ENCODE measurements at regions of chr9 and their contacts with region 1.

Region 1: GRCh38 chr9:112717661-112718341 is at the start of gene INIP:
- DNase-seq: peak; percentile 93 to 98 (median 96)
- H3K4me3 ChIP-seq: peak within 1 kb of the TSS; percentile 70 to 99 (median 92)
- H3K27ac ChIP-seq: peak within 1 kb of the TSS; percentile 66 to 98 (median 90)
- H3K27me3 ChIP-seq: no peaks in the 10 kb centered on the region
- CTCF ChIP-seq: peak in 25 of 56 donors; percentile 7 to 47 (median 24)
- total RNA-seq, gene INIP: 23.7 to 52.8 (median 39.3) TPM

Region 2: DNA sequence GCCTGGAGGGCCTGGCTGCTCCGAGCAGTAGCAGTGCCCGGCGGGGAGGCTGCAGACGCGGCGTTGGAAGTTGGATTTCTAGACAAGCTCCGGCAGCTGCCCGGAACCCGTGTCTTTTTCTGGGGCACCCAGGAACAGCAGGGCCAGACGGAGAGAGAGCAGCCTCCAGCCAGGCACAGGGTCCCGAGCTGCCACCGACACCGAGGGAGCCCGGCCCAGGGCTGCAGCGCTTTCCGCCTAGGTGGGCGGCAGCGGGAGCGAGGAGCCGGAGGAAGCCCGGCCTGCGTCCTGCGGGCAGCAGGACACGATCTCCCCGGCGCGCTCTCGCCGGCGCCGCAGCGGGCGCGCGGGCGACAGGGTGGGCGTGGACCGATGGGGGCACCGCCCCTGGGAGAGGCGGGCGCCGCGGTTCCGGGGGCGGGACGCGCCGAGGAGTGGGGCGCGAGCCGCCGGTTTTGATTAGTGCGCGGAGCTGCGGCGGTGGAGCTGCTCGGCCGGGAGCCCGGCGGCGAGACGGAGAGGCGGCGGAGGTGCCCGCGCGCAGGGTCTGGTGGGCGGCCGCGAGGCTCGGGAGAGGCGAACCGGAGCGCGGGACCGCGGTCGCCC is 821.3 kb before region 1 on chr9 and contains the start of gene UGCG:
- intact Hi-C with region 1: loop called in 1 of 2 experiments (anchors 5 kb)
- DNase-seq: peak; percentile 62 to 94 (median 86)
- H3K4me3 ChIP-seq: peak within 1 kb of the TSS; percentile 68 to 98 (median 89)
- H3K27ac ChIP-seq: peak within 1 kb of the TSS in 58 of 59 donors; percentile 67 to 96 (median 90)
- H3K27me3 ChIP-seq: no peaks in the 10 kb centered on the region
- CTCF ChIP-seq: peak in 10 of 56 donors; percentile 4 to 55 (median 12)
- total RNA-seq, gene UGCG: 12.6 to 46.0 (median 30.8) TPM

Region 3: GRCh38 chr9:112443200-112443599 is 274.6 kb before region 1 on chr9:
- intact Hi-C with region 1: loop called in 1 of 2 experiments (anchors 10 kb)
- DNase-seq: peak in 1 of 10 donors; percentile 31
- H3K4me3 ChIP-seq: no peak overlapping the region
- H3K27ac ChIP-seq: no peak overlapping the region
- H3K27me3 ChIP-seq: no peaks in the 10 kb centered on the region
- CTCF ChIP-seq: peak in 55 of 56 donors; percentile 25 to 79 (median 60)

Region 4: GRCh38 chr9:112750111-112750767 is 32.4 kb after region 1 on chr9 and contains the start of gene SNX30:
- intact Hi-C with region 1: loop called (anchors 2 kb)
- DNase-seq: peak; percentile 83 to 93 (median 89)
- H3K4me3 ChIP-seq: peak within 1 kb of the TSS; percentile 78 to 99 (median 94)
- H3K27ac ChIP-seq: peak within 1 kb of the TSS; percentile 83 to 100 (median 97)
- H3K27me3 ChIP-seq: no peaks in the 10 kb centered on the region
- CTCF ChIP-seq: peak in 48 of 56 donors; percentile 9 to 63 (median 42)
- total RNA-seq, gene SNX30: 19.1 to 51.5 (median 35.4) TPM

Region 5: GRCh38 chr9:112764344-112764743 is 46.5 kb after region 1 on chr9:
- intact Hi-C with region 1: no loop called
- DNase-seq: no peak
- H3K4me3 ChIP-seq: no peak overlapping the region
- H3K27ac ChIP-seq: peak overlapping the region in 19 of 59 donors; percentile 2 to 55 (median 29)
- H3K27me3 ChIP-seq: no peaks in the 10 kb centered on the region
- CTCF ChIP-seq: no peak

Region 6: DNA sequence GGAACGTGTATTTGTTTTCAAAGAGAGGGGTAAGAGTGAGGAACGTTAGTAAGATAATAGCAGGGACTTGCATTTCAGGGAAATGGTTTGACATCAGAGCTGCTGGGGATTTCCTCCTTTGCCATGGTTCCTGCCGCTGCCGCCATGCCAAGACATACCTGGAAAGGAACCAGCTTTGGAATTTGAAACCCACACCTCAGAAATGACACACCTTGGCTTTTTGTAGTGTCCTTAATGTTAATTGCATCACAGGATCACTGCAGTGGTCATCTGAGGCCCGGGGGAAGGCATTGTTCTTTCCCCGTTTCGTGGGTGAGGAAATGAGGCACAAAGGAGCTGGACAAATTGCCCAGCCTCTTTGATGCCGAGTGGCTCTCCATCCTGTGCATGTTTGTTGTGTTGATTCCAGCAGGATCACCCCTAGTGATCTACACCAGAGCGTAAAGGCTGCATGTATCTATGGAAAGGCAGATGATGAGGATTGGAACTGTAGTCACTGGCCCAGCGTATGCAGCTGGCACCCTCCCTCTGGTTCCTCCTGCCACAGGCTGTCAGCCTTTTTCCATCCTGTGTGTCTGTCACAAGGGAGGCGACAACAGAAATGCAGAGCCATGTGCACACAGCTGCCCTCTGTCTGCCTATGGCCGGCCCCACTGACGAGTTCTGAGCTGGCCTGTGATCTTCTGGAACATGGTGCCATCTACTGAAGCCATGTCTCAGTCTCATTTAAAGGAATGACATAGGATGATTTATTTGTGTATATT is 135.1 kb after region 1 on chr9:
- intact Hi-C with region 1: loop called in 1 of 2 experiments (anchors 5 kb)
- DNase-seq: peak in 9 of 10 donors; percentile 51 to 89 (median 77)
- H3K4me3 ChIP-seq: peak overlapping the region in 1 of 59 donors; percentile 8
- H3K27ac ChIP-seq: peak overlapping the region in 57 of 59 donors; percentile 1 to 92 (median 76)
- H3K27me3 ChIP-seq: no peaks in the 10 kb centered on the region
- CTCF ChIP-seq: peak in 51 of 56 donors; percentile 17 to 80 (median 47)

Region 7: GRCh38 chr9:112867416-112867991 is 149.7 kb after region 1 on chr9:
- intact Hi-C with region 1: no loop called
- DNase-seq: no peak
- H3K4me3 ChIP-seq: no peak overlapping the region
- H3K27ac ChIP-seq: peak overlapping the region in 2 of 59 donors; percentile 22 to 23
- H3K27me3 ChIP-seq: no peaks in the 10 kb centered on the region
- CTCF ChIP-seq: no peak

Region 8: GRCh38 chr9:113178087-113178486 is 460.3 kb after region 1 on chr9:
- intact Hi-C with region 1: no loop called
- DNase-seq: no peak
- H3K4me3 ChIP-seq: no peak overlapping the region
- H3K27ac ChIP-seq: no peak overlapping the region
- H3K27me3 ChIP-seq: no peaks in the 10 kb centered on the region
- CTCF ChIP-seq: no peak

Measured in dorsolateral prefrontal cortex (tissue), 120 donors.